IMR-90 (cell line): ENCODE measurements at regions of chr11 and their contacts with region 1.

Region 1: GRCh38 chr11:100639140-100639539 is 47.9 kb upstream of the ARHGAP42 start:
- DNase-seq: peak; percentile 83
- ATAC-seq: peak; percentile 50
- H3K4me3 ChIP-seq: no peak overlapping the region
- H3K27ac ChIP-seq: peak overlapping the region; percentile 46
- H3K4me1 ChIP-seq: peaks cover 18% of the 10 kb centered on the region
- H3K27me3 ChIP-seq: no peaks in the 10 kb centered on the region
- CTCF ChIP-seq: no peak
- POLR2A ChIP-seq: no peak
- RAD21 ChIP-seq: no peak

Region 2: DNA sequence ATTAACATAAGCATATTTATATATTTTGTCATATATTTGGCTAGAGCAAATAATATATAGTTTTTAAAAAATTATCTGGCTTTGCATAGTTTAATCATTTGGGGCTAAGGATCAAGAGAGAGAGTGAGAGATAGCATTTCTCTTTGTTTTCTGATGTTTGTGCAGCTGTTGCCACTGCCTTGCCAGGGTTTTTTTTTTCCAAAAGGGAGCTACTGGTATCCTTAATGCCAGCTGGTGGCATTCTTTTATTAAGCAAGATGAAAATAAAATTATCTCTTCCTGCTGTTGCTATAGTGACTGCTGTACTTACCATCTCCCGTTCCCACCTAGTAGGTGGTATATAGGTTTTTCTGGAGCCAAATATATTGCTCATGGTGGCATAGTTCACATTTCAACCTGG is 745.3 kb before region 1 on chr11:
- CTCF ChIA-PET with region 1: no interaction called
- POLR2A ChIA-PET with region 1: no interaction called
- dilution Hi-C with region 1: no loop called
- in situ Hi-C with region 1: no loop called
- intact Hi-C with region 1: no loop called
- DNase-seq: no peak
- ATAC-seq: no peak
- H3K4me3 ChIP-seq: no peak overlapping the region
- H3K27ac ChIP-seq: no peak overlapping the region
- H3K4me1 ChIP-seq: no peaks in the 10 kb centered on the region
- H3K27me3 ChIP-seq: no peaks in the 10 kb centered on the region
- CTCF ChIP-seq: no peak
- POLR2A ChIP-seq: no peak
- RAD21 ChIP-seq: no peak

Region 3: DNA sequence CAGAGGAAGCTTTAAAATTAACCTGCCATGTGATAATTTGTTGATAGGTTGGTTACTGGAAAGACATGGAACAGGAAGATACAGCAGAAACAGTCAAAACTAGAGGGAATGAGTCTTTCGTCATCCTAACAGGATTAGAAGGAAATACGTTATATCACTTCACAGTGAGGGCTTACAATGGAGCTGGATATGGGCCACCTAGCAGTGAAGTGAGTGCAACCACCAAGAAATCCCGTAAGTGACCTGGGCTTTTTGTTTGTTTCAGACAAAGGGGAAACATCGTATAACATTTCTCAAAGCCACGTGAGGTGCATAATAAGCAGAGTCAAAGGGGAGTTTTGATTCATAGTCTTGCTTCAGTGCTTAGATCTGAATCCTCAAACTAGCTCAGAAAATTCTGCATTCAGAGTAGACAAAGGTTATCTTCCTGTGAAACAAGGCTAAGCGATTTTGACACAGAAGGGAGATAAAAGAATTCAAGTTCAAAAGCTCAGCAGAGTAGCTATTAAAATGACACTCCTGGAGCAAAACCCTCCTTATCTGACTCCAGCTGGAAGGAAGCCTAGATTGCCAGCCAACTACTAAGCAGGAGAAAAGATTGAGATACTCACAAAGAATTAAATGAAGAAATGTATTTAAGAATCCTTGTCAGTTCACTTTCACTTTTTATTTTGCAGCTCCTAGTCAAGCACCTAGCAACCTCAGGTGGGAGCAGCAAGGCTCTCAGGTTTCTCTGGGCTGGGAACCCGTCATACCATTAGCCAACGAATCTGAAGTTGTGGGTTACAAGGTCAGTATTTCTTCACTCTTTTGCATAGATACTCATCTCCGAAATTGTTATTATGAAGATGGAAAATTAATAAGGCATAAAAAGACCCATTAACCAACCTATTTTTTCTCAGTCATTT is 298.5 kb before region 1 on chr11:
- CTCF ChIA-PET with region 1: no interaction called
- POLR2A ChIA-PET with region 1: no interaction called
- dilution Hi-C with region 1: no loop called
- in situ Hi-C with region 1: no loop called
- intact Hi-C with region 1: no loop called
- DNase-seq: no peak
- ATAC-seq: no peak
- H3K4me3 ChIP-seq: no peak overlapping the region
- H3K27ac ChIP-seq: no peak overlapping the region
- H3K4me1 ChIP-seq: no peaks in the 10 kb centered on the region
- H3K27me3 ChIP-seq: peaks cover 2% of the 10 kb centered on the region
- CTCF ChIP-seq: no peak
- POLR2A ChIP-seq: no peak
- RAD21 ChIP-seq: no peak

Region 4: GRCh38 chr11:100612766-100613165 is 26.4 kb before region 1 on chr11:
- CTCF ChIA-PET with region 1: no interaction called
- POLR2A ChIA-PET with region 1: no interaction called
- dilution Hi-C with region 1: no loop called
- in situ Hi-C with region 1: no loop called
- intact Hi-C with region 1: no loop called
- DNase-seq: no peak
- ATAC-seq: no peak
- H3K4me3 ChIP-seq: no peak overlapping the region
- H3K27ac ChIP-seq: no peak overlapping the region
- H3K4me1 ChIP-seq: no peaks in the 10 kb centered on the region
- H3K27me3 ChIP-seq: no peaks in the 10 kb centered on the region
- CTCF ChIP-seq: no peak
- POLR2A ChIP-seq: no peak
- RAD21 ChIP-seq: no peak

Region 5: DNA sequence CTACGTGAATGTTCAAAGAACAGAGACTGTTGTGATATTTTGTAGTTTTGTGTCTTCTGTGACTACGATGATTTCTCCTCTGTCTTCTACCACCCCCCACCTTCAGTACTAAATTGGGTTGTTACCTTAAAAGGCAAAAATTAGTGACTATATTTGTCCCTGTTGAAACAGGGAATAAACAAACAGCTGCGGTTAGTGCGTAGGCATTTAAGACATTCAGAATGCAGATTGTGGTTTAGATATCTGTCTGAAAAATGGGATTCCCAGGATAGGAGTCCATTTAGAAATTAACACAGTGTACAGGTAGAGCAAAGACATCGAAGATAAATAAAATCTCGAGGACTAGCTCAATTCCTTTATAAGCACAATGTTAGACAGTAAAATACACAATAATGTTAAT is 32.3 kb after region 1 on chr11:
- CTCF ChIA-PET with region 1: no interaction called
- POLR2A ChIA-PET with region 1: no interaction called
- dilution Hi-C with region 1: no loop called
- in situ Hi-C with region 1: no loop called
- intact Hi-C with region 1: loop called (anchors 5 kb)
- DNase-seq: peak; percentile 44
- ATAC-seq: no peak
- H3K4me3 ChIP-seq: no peak overlapping the region
- H3K27ac ChIP-seq: no peak overlapping the region
- H3K4me1 ChIP-seq: peaks cover 6% of the 10 kb centered on the region
- H3K27me3 ChIP-seq: no peaks in the 10 kb centered on the region
- CTCF ChIP-seq: no peak
- POLR2A ChIP-seq: no peak
- RAD21 ChIP-seq: no peak

Region 6: GRCh38 chr11:100961633-100962032 is 322.5 kb after region 1 on chr11:
- CTCF ChIA-PET with region 1: no interaction called
- POLR2A ChIA-PET with region 1: no interaction called
- dilution Hi-C with region 1: no loop called
- in situ Hi-C with region 1: no loop called
- intact Hi-C with region 1: no loop called
- DNase-seq: peak; percentile 11
- ATAC-seq: no peak
- H3K4me3 ChIP-seq: no peak overlapping the region
- H3K27ac ChIP-seq: no peak overlapping the region
- H3K4me1 ChIP-seq: no peaks in the 10 kb centered on the region
- H3K27me3 ChIP-seq: no peaks in the 10 kb centered on the region
- CTCF ChIP-seq: no peak
- POLR2A ChIP-seq: no peak
- RAD21 ChIP-seq: no peak